Transverse colon (tissue), 4 donors: ENCODE measurements at regions of chr2 and their contacts with region 1.

Region 1: DNA sequence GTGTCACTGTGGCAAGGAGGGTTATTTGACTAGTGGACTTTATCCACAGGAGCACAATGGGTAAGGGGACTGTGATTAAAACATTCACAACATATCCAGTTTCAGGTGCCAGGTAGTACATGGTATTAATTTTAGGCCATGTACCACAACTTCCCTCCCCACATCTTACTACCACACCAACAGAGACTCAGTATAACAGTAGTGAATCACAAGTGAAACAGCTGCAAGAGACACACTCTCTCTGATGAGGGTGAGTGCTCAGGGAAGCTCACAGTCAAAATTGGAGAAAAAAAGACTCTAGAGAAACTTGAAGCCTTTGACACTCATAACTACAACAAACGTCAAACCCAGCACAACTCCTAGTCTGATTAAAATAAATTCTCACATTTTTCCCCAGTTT is 367.6 kb upstream of the GYPC start:
- DNase-seq: no peak
- H3K4me3 ChIP-seq: no peak overlapping the region
- H3K27ac ChIP-seq: no peak overlapping the region
- H3K4me1 ChIP-seq: no peaks in the 10 kb centered on the region
- H3K27me3 ChIP-seq: no peaks in the 10 kb centered on the region
- CTCF ChIP-seq: no peak
- EP300 ChIP-seq: no peak
- POLR2A ChIP-seq: no peak

Region 2: GRCh38 chr2:125837128-125837527 is 451.2 kb before region 1 on chr2:
- in situ Hi-C with region 1: no loop called
- intact Hi-C with region 1: no loop called
- DNase-seq: no peak
- H3K4me3 ChIP-seq: no peak overlapping the region
- H3K27ac ChIP-seq: no peak overlapping the region
- H3K4me1 ChIP-seq: peaks cover 0 to 3% (median 0%) of the 10 kb centered on the region in 4 donors
- H3K27me3 ChIP-seq: no peaks in the 10 kb centered on the region
- CTCF ChIP-seq: no peak
- EP300 ChIP-seq: no peak
- POLR2A ChIP-seq: no peak

Region 3: DNA sequence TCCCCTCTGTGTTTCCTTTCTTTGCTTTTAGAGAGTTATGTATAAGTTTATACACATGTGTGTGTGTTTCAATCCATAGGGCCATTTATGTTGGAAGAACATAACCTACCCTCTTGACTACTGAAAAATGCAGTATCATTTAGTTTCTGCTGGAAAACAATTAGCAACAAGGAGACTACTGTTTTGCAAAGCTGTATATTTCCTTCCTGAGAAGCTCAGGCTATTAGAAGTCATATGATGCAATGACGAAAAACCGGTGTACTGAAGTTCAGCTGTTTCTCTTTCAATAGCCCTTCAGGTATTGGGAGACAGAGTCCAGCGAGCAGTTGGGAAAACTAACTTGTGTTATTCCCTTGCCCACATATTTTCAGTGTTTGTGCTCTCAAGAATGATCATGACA is 80.1 kb before region 1 on chr2:
- in situ Hi-C with region 1: no loop called
- intact Hi-C with region 1: no loop called
- DNase-seq: no peak
- H3K4me3 ChIP-seq: no peak overlapping the region
- H3K27ac ChIP-seq: no peak overlapping the region
- H3K4me1 ChIP-seq: no peaks in the 10 kb centered on the region
- H3K27me3 ChIP-seq: no peaks in the 10 kb centered on the region
- CTCF ChIP-seq: no peak
- EP300 ChIP-seq: no peak
- POLR2A ChIP-seq: no peak

Region 4: DNA sequence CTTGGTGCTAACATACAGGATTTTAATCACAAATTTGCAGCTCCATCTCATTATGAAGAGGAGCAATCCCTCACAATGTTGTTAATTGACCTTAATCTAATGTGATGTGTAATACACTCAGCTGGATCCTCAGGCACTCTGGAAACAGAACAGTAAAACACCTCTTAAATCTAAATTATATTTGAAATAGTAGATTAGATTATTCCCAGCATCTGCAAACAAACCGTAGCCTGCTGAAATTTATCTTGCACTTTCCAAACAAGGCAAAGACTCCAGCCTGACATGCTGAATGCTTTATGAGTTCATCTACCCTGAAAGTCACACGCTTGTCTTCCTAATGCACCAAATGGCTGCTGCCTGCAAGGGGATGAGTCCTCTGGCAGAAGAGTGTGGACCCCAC is 34.7 kb before region 1 on chr2:
- in situ Hi-C with region 1: no loop called
- intact Hi-C with region 1: loop called (anchors 2 kb)
- DNase-seq: no peak
- H3K4me3 ChIP-seq: no peak overlapping the region
- H3K27ac ChIP-seq: no peak overlapping the region
- H3K4me1 ChIP-seq: no peaks in the 10 kb centered on the region
- H3K27me3 ChIP-seq: no peaks in the 10 kb centered on the region
- CTCF ChIP-seq: no peak
- EP300 ChIP-seq: no peak
- POLR2A ChIP-seq: no peak